Activated CD4-positive, alpha-beta memory T cell treated with anti-CD3 and anti-CD28 coated beads, Interleukin-2, amount 10 ng/mL, durations not matched to agents 7 days and 5 days (primary cell): ENCODE measurements at regions of chr5 and their contacts with region 1.

Region 1: DNA sequence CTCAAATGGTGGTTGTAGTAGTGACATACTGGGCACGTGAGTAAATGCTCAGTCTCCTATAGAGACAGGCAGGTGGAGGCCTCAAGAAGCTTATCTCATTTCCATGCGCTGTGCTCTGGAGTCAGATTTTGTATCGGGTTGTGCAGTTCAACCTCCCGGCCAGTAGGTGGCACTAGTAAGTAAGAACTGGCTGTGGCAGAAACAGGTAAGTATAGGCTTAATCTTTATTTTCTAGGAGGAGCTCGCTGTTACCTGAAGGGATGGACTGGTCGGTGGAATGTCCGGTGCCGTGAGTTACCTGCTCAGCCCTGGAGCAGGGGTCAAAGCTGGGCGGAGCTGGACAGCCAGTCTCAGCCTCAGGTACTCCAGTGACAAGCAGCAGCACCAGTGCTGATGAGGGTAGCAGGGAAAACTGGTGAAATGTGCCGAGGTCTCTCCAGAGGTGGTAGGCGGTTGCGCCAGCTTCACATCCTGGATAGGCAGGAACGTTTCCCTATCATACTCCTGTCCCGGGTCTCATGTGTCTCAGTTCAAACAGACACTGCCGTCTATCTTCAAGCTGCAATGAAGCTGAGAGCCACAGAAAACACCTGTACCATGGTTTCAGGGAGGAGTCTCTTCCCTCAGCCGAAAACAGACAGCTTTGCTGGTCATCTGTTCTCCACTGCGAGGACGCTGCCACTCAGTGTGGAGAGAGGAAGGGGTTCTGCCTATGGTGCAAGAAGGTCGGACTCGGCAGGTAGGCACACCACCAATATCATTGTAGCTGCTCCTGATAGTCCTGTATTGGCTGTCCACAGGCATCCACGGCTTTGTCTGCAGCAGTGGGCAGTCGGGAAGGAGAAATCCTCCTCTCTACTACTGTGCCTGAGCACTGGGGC is 880.3 kb upstream of the SEMA6A start:
- DNase-seq: peak; percentile 49
- H3K4me3 Mint-ChIP-seq: peak overlapping the region; percentile 9
- H3K27ac Mint-ChIP-seq: no peak overlapping the region
- H3K4me1 Mint-ChIP-seq: no peaks in the 10 kb centered on the region
- H3K27me3 Mint-ChIP-seq: no peaks in the 10 kb centered on the region

Region 2: DNA sequence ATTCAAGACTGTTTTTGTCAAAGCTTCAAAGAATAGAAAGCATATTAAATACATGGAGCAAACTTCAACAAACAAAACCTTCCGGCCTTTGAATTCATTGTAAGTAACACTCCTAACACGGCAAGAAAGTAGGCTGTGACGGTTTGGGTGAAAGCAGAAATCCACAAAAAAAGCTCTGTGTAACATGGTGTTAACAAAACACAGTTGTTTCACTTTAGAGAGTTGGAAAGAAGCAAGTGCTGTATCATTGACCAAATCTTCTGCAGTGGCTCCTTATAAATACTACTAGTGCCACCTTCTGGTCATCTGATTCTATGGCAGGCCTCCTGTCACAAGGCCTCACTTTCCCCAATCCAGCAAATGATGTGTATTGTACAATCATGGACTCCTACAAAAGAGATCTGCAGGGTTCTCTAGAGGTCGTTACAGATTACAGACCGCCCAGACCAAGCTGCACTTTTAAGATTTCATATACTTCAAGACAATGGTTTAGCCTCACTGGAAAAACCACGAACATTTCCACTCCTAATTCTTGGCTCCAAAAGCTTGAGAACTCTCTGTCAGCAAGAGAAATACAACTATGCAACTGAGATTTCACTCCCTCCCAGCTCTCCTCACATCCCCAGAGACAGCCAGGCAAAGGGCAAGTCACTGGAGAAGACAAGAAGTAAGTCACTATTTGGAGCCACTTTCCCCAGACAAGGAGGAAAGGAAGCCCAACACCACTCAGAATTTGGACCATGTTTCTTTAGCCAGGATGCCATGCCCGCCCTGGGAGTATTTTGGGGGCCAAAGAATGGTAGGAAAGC is 1337.2 kb after region 1 on chr5:
- CTCF ChIA-PET with region 1: interaction called, 11 read pairs
- POLR2A ChIA-PET with region 1: no interaction called
- DNase-seq: peak; percentile 21
- H3K4me3 Mint-ChIP-seq: no peak overlapping the region
- H3K27ac Mint-ChIP-seq: no peak overlapping the region
- H3K4me1 Mint-ChIP-seq: no peaks in the 10 kb centered on the region
- H3K27me3 Mint-ChIP-seq: no peaks in the 10 kb centered on the region